CD4-positive, alpha-beta memory T cell (primary cell): ENCODE measurements at regions of chr2 and their contacts with region 1.

Region 1: GRCh38 chr2:85826990-85827878 is 61.6 kb downstream of the ST3GAL5 start:
- DNase-seq: peak; percentile 77 to 80 (median 79)
- H3K4me3 ChIP-seq: no peak overlapping the region
- H3K4me3 Mint-ChIP-seq: peak overlapping the region in 4 of 8 donors; percentile 36 to 64 (median 57)
- H3K27ac ChIP-seq: no peak overlapping the region
- H3K27ac Mint-ChIP-seq: peak overlapping the region; percentile 23 to 74 (median 57)
- H3K4me1 ChIP-seq: peaks cover 14% of the 10 kb centered on the region
- H3K4me1 Mint-ChIP-seq: peaks cover 8 to 24% (median 18%) of the 10 kb centered on the region in 4 donors
- H3K27me3 ChIP-seq: no peaks in the 10 kb centered on the region
- H3K27me3 Mint-ChIP-seq: peaks cover 3 to 4% of the 10 kb centered on the region in 2 donors

Region 2: DNA sequence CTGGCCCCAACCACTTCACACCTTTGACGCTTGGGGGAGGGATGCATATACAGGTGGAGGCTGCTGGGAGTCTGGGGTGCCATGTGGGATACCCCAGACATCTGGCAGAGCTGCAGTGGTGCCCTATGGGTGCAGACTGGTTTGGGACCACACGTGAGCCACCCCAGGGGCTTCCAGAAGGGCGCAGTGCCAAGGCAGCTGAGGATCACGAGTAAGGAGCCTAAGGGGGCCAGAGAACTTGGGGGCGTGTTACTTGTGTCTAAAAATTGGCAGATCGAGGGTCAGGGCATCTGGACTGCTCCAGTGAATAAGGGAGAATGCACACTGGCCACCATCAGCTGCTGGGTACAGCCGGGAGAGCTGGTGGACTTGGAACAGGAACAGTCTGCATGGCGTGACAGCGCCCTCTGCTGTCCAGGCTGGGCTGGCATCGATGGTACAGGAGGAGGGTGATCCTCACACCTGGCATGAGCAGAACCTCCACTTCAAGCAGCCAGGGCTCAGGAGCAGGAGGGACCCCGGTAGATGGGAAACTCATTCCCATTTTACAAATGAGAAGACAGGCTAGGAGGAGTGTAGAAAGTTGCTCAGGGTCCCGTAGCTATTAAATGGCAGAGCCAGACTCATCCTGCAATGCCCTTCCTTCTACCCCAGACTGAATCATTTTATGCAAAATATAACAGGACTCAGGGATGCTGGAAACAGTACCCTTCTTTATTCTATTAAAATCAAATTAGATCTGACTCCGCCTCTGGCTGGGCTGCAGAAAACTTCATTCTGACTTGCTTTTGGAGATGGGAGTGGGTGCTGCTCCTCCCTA is 13.0 kb before region 1 on chr2:
- CTCF ChIA-PET with region 1: interaction called, 10 read pairs
- POLR2A ChIA-PET with region 1: no interaction called
- intact Hi-C with region 1: no loop called
- DNase-seq: peak; percentile 64 to 75 (median 69)
- H3K4me3 ChIP-seq: no peak overlapping the region
- H3K4me3 Mint-ChIP-seq: no peak overlapping the region
- H3K27ac ChIP-seq: no peak overlapping the region
- H3K27ac Mint-ChIP-seq: peak overlapping the region in 2 of 7 donors; percentile 4 to 67
- H3K4me1 ChIP-seq: no peaks in the 10 kb centered on the region
- H3K4me1 Mint-ChIP-seq: peaks cover 0 to 2% (median 0%) of the 10 kb centered on the region in 4 donors
- H3K27me3 ChIP-seq: no peaks in the 10 kb centered on the region
- H3K27me3 Mint-ChIP-seq: peaks cover 6 to 10% of the 10 kb centered on the region in 2 donors

Region 3: DNA sequence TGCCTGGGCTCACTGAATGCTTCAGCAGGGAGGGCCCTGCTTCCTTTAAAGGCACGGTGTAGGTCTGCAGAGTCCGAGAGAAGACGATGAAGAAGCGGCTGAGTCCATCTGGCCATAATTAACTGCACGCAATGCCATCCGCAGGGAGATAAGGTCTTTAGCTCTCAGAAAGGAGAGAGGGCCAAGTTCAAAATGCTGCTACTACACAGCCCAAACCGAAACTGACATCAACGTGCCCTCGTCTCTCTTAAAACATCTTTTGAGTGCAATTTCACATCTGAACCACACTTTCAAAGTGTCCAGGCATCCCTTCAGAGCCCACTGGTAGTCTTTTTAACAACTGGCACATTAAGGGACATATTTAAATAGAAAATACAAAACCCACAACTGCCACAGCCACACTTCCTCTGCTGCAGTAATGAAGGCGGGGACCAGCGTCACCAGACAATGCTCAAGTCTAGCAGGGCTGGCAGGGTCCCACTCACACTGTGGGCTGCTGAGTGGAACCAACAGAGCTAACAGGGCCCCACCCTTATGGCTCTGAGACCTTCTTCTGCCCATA is 25.8 kb after region 1 on chr2:
- CTCF ChIA-PET with region 1: interaction called, 84 read pairs
- POLR2A ChIA-PET with region 1: interaction called, 20 read pairs
- intact Hi-C with region 1: loop called (anchors 1 kb)
- DNase-seq: peak; percentile 73 to 88 (median 74)
- H3K4me3 ChIP-seq: peak overlapping the region; percentile 34 to 48
- H3K4me3 Mint-ChIP-seq: peak overlapping the region; percentile 82 to 92 (median 86)
- H3K27ac ChIP-seq: peak overlapping the region; percentile 84
- H3K27ac Mint-ChIP-seq: peak overlapping the region; percentile 98 to 100 (median 100)
- H3K4me1 ChIP-seq: peaks cover 81% of the 10 kb centered on the region
- H3K4me1 Mint-ChIP-seq: peaks cover 67 to 87% (median 76%) of the 10 kb centered on the region in 4 donors
- H3K27me3 ChIP-seq: no peaks in the 10 kb centered on the region
- H3K27me3 Mint-ChIP-seq: no peaks in the 10 kb centered on the region

Region 4: DNA sequence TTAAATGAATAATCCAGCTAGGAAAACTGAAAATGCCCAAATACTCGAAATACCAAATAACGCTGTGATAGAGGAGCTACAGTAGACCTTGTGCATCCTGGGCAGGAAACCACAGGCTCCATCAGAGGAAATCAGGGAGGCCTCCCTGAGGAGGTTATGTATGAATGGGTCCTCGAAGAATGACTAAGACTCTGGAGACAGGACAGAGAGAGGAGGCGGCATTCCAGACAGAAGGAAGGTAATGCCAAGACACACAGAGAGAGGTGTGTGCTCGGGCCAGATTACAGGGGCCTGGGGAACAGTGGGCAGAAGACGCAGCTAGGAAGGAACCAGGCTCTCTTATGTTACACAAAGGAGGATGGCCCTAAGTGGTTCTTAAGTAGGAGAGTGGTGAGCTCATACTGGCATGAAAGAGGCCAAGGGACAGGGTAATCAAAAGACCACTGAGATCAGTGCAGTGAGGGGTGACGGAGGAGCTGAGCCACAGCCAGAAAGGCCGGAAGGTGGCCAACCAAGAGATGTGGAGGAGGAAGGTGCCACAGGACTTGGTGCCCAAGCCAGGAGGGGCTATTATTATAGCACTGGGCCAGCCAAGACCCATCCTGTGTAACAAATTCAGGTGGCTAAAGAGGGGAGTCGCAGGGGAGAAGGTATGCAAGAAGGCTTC is 51.6 kb after region 1 on chr2:
- CTCF ChIA-PET with region 1: interaction called, 275 read pairs
- POLR2A ChIA-PET with region 1: interaction called, 3 read pairs
- intact Hi-C with region 1: no loop called
- DNase-seq: no peak
- H3K4me3 ChIP-seq: no peak overlapping the region
- H3K4me3 Mint-ChIP-seq: peak overlapping the region; percentile 3 to 80 (median 52)
- H3K27ac ChIP-seq: no peak overlapping the region
- H3K27ac Mint-ChIP-seq: peak overlapping the region in 6 of 7 donors; percentile 37 to 92 (median 70)
- H3K4me1 ChIP-seq: peaks cover 24% of the 10 kb centered on the region
- H3K4me1 Mint-ChIP-seq: peaks cover 46 to 82% (median 66%) of the 10 kb centered on the region in 4 donors
- H3K27me3 ChIP-seq: no peaks in the 10 kb centered on the region
- H3K27me3 Mint-ChIP-seq: no peaks in the 10 kb centered on the region

Region 5: GRCh38 chr2:86035883-86036668 is 208.8 kb after region 1 on chr2:
- CTCF ChIA-PET with region 1: interaction called, 150 read pairs
- POLR2A ChIA-PET with region 1: interaction called, 22 read pairs
- intact Hi-C with region 1: loop called (anchors 1 kb)
- DNase-seq: peak; percentile 79 to 88 (median 84)
- H3K4me3 ChIP-seq: peak overlapping the region; percentile 28 to 37
- H3K4me3 Mint-ChIP-seq: peak overlapping the region; percentile 74 to 87 (median 84)
- H3K27ac ChIP-seq: peak overlapping the region; percentile 82
- H3K27ac Mint-ChIP-seq: peak overlapping the region; percentile 96 to 100 (median 100)
- H3K4me1 ChIP-seq: peaks cover 81% of the 10 kb centered on the region
- H3K4me1 Mint-ChIP-seq: peaks cover 56 to 82% (median 68%) of the 10 kb centered on the region in 4 donors
- H3K27me3 ChIP-seq: no peaks in the 10 kb centered on the region
- H3K27me3 Mint-ChIP-seq: peaks cover 0 to 2% of the 10 kb centered on the region in 2 donors

Region 6: DNA sequence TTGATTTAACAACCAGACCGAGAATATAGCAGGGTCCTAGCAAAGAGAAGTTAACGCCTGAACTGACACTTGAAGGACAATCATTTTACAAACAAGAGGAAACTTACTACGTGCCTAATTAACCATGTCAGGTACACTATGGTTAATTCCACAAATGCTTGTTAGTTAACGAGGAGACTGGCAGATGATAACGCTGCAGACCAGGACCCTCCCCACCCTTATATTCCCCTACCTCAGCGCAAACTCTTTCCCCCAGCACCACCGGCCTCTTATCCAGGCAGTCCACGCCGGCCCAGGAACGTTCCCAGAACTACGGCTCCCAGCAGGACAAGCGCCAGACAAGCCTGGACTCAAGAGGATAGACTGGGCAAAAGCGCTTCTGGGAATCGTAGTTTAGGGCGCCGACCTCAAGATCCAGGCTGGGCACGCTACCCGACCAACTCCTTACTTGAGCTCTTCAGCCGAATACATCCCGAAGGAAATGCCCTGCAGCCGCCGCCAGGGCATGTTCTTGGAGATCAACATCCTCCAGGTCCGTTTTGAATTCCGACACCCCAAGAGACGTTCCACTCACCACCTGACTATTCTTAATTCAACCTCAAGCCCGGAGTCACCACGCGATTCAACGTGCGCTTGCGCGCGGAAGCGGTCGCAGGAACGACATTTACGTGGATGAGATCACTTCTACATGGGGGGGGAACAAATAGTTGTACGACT is 278.2 kb after region 1 on chr2 and contains the start of gene POLR1A:
- CTCF ChIA-PET with region 1: interaction called, 10 read pairs
- POLR2A ChIA-PET with region 1: interaction called, 9 read pairs
- intact Hi-C with region 1: loop called (anchors 1 kb)
- DNase-seq: peak; percentile 88 to 91 (median 90)
- H3K4me3 ChIP-seq: peak within 1 kb of the TSS; percentile 73 to 83
- H3K4me3 Mint-ChIP-seq: peak within 1 kb of the TSS; percentile 88 to 96 (median 92)
- H3K27ac ChIP-seq: peak within 1 kb of the TSS; percentile 82
- H3K27ac Mint-ChIP-seq: peak within 1 kb of the TSS; percentile 93 to 100 (median 99)
- H3K4me1 ChIP-seq: peaks cover 34% of the 10 kb centered on the region
- H3K4me1 Mint-ChIP-seq: peaks cover 47 to 79% (median 61%) of the 10 kb centered on the region in 4 donors
- H3K27me3 ChIP-seq: no peaks in the 10 kb centered on the region
- H3K27me3 Mint-ChIP-seq: no peaks in the 10 kb centered on the region
- total RNA-seq, gene POLR1A: 23.4 to 25.8 TPM